ENCODE measurements at regions of chr17 and their contacts with region 1.

Region 1: DNA sequence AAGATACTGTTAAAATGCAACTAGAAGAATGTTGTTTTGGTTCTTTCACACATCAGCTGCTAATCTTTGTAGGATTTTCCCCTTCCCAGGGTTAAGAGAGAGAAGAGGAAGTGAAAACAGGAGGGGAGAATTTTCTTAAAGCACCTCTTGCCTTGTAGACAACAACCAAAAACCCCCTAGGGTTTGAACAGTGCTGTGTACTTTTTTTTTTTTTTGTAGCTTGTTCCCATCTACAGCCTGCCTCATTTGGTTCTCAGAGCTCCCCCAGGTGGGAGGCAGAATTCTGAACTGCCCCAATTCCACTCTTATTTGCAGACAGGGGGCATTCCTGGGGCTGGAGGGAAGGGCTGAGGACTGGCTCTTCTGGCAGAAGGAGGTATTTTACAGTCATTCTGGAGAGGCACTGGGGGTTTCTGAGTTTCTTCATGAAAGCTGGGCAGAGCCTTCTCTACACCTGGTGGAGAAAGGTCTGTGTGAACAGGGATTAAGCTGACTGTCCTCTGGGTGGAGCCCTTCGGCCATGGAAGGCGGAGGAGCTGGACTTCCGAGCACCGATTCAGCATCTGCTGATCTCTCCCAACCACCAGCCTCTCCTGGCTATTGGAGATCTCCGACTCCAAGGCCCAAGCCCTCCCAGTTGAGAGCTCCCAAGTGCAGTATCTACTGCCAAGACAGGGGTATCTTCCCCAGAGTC is 32.2 kb downstream of the SMARCE1 start:
- ATAC-seq: peak in 4 of 8 experiments; percentile 32 to 85 (median 66)
- H3K4me3 ChIP-seq: no peak overlapping the region
- H3K27ac ChIP-seq: no peak overlapping the region
- H3K4me1 ChIP-seq: no peaks in the 10 kb centered on the region

Region 2: GRCh38 chr17:40707720-40708119 is 92.3 kb after region 1 on chr17:
- in situ Hi-C with region 1: no loop called
- ATAC-seq: peak in 2 of 8 experiments; percentile 13 to 16
- H3K4me3 ChIP-seq: no peak overlapping the region
- H3K27ac ChIP-seq: no peak overlapping the region
- H3K4me1 ChIP-seq: no peaks in the 10 kb centered on the region

Region 3: GRCh38 chr17:40791787-40792436 is 176.5 kb after region 1 on chr17:
- in situ Hi-C with region 1: loop called in 3 of 9 experiments (anchors 10 to 25 kb)
- ATAC-seq: peak in 3 of 8 experiments; percentile 38 to 69 (median 62)
- H3K4me3 ChIP-seq: no peak overlapping the region
- H3K27ac ChIP-seq: no peak overlapping the region
- H3K4me1 ChIP-seq: no peaks in the 10 kb centered on the region

Region 4: GRCh38 chr17:40873255-40873654 is 257.8 kb after region 1 on chr17:
- in situ Hi-C with region 1: no loop called
- ATAC-seq: no peak
- H3K4me3 ChIP-seq: no peak overlapping the region
- H3K27ac ChIP-seq: no peak overlapping the region
- H3K4me1 ChIP-seq: peaks cover 0 to 13% of the 10 kb centered on the region in 2 donors